Uterus (tissue), 4 donors: ENCODE measurements at regions of chr3 and their contacts with region 1.

Region 1: GRCh38 chr3:46488735-46489361 is 8.9 kb upstream of the RTP3 start:
- DNase-seq: peak; percentile 79 to 82
- H3K4me3 ChIP-seq: no peak overlapping the region
- H3K27ac ChIP-seq: no peak overlapping the region
- H3K4me1 ChIP-seq: no peaks in the 10 kb centered on the region
- H3K27me3 ChIP-seq: no peaks in the 10 kb centered on the region
- CTCF ChIP-seq: peak; percentile 86 to 97 (median 95)
- POLR2A ChIP-seq: no peak

Region 2: GRCh38 chr3:46629551-46630517 is 141.0 kb after region 1 on chr3:
- intact Hi-C with region 1: loop called (anchors 10 kb)
- DNase-seq: peak; percentile 72 to 82
- H3K4me3 ChIP-seq: peak overlapping the region; percentile 29 to 36
- H3K27ac ChIP-seq: peak overlapping the region; percentile 64 to 69
- H3K4me1 ChIP-seq: no peaks in the 10 kb centered on the region
- H3K27me3 ChIP-seq: no peaks in the 10 kb centered on the region
- CTCF ChIP-seq: peak; percentile 97 to 100 (median 98)
- POLR2A ChIP-seq: no peak